ENCODE measurements at regions of chr5 and their contacts with region 1.

Region 1: DNA sequence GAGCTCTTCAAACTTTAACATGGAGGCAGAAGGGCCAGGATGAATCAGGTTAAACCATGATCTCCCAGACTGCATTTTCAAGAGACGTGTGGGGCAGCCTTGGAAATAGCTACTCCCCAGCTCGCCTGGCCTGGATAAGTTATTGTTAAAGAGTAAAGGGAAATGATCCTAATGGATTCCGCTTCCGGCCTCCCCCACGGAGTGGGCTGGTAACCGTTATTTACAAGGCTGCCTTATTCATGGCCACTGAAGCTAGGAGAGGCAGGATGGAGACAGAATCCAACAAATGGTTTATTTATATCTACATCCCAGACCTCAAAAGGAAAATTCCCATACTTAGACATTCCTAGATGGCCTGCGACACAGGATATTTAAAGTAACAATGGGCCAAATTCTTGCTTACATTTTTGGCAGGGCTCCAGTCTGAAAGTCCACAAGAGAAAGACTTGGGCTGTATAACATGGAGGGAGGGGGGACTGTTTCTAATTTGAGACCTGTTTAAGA is 27.9 kb downstream of the SPRY4 start:
- DNase-seq: peak; percentile 98
- H3K4me3 ChIP-seq: no peak overlapping the region
- H3K27ac ChIP-seq: peak overlapping the region; percentile 99
- H3K4me1 ChIP-seq: peaks cover 41% of the 10 kb centered on the region
- H3K27me3 ChIP-seq: no peaks in the 10 kb centered on the region
- CTCF ChIP-seq: no peak
- POLR2A ChIP-seq: no peak

Region 2: DNA sequence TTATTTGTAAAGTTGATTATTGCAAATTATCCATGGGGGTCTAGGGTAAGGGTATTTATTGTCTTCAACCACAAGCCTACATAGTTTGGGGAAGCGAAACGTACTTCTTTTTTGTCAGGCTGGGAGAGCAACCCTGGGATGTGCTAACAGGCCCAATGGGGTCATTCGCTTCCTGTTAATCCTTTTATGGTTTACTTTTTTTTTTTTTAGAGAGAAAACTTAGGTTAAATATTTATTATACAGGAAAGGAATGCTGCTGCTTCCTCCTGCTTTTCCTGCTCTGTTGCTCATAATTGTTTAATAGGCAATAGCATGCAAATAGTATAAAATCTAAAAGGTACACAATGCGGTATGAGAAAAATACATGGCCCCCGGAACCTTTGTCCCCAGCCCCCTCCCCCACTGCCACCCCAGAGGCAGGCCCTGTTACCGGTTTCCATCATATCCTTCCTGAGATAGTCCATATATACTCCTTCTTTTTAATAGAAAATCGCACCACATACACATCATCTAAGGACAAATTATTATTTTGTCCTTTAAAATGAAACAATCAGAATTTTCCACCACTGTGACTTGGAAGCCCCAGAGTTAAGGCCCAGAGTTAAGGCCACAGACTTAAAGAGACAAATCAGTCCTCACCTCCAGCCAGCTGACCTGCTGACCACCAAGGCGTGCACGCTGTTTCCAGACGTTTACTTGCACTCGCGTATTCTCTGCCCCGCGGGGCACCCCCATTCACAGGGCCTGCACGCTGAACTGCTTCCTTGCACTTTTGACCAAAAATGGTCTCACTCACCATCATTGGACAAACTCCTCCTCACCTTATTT is 104.5 kb before region 1 on chr5:
- CTCF ChIA-PET with region 1: no interaction called
- POLR2A ChIA-PET with region 1: no interaction called
- dilution Hi-C with region 1: no loop called
- intact Hi-C with region 1: loop called (anchors 1 kb)
- DNase-seq: peak; percentile 41
- H3K4me3 ChIP-seq: no peak overlapping the region
- H3K27ac ChIP-seq: peak overlapping the region; percentile 75
- H3K4me1 ChIP-seq: peaks cover 29% of the 10 kb centered on the region
- H3K27me3 ChIP-seq: no peaks in the 10 kb centered on the region
- CTCF ChIP-seq: no peak
- POLR2A ChIP-seq: no peak

Region 3: GRCh38 chr5:142222866-142223558 is 74.0 kb before region 1 on chr5:
- CTCF ChIA-PET with region 1: no interaction called
- POLR2A ChIA-PET with region 1: no interaction called
- dilution Hi-C with region 1: no loop called
- intact Hi-C with region 1: loop called (anchors 2 kb)
- DNase-seq: no peak
- H3K4me3 ChIP-seq: no peak overlapping the region
- H3K27ac ChIP-seq: no peak overlapping the region
- H3K4me1 ChIP-seq: peaks cover 26% of the 10 kb centered on the region
- H3K27me3 ChIP-seq: no peaks in the 10 kb centered on the region
- CTCF ChIP-seq: no peak
- POLR2A ChIP-seq: no peak

Region 4: GRCh38 chr5:142280066-142280911 is 16.7 kb before region 1 on chr5:
- CTCF ChIA-PET with region 1: interaction called, 11 read pairs
- POLR2A ChIA-PET with region 1: interaction called, 5 read pairs
- dilution Hi-C with region 1: no loop called
- intact Hi-C with region 1: loop called (anchors 1 kb)
- DNase-seq: peak; percentile 70
- H3K4me3 ChIP-seq: no peak overlapping the region
- H3K27ac ChIP-seq: peak overlapping the region; percentile 75
- H3K4me1 ChIP-seq: peaks cover 15% of the 10 kb centered on the region
- H3K27me3 ChIP-seq: no peaks in the 10 kb centered on the region
- CTCF ChIP-seq: no peak
- POLR2A ChIP-seq: no peak

Region 5: GRCh38 chr5:142324871-142325724 is 28.1 kb after region 1 on chr5 and contains the start of gene SPRY4:
- CTCF ChIA-PET with region 1: interaction called, 8 read pairs
- POLR2A ChIA-PET with region 1: interaction called, 4 read pairs
- dilution Hi-C with region 1: no loop called
- intact Hi-C with region 1: loop called (anchors 1 kb)
- DNase-seq: peak; percentile 98
- H3K4me3 ChIP-seq: peak within 1 kb of the TSS; percentile 76 to 89 (median 81)
- H3K27ac ChIP-seq: peak within 1 kb of the TSS; percentile 88
- H3K4me1 ChIP-seq: peaks cover 48% of the 10 kb centered on the region
- H3K27me3 ChIP-seq: no peaks in the 10 kb centered on the region
- CTCF ChIP-seq: no peak
- POLR2A ChIP-seq: peak; percentile 97
- total RNA-seq, gene SPRY4: 33.9 and 49.5 TPM in 2 replicates

Region 6: GRCh38 chr5:142426129-142427014 is 129.4 kb after region 1 on chr5:
- CTCF ChIA-PET with region 1: interaction called, 4 read pairs
- POLR2A ChIA-PET with region 1: no interaction called
- dilution Hi-C with region 1: no loop called
- intact Hi-C with region 1: loop called (anchors 1 kb)
- DNase-seq: peak; percentile 85
- H3K4me3 ChIP-seq: peak overlapping the region in 1 of 3 experiments; percentile 38
- H3K27ac ChIP-seq: peak overlapping the region; percentile 70
- H3K4me1 ChIP-seq: peaks cover 44% of the 10 kb centered on the region
- H3K27me3 ChIP-seq: no peaks in the 10 kb centered on the region
- CTCF ChIP-seq: no peak
- POLR2A ChIP-seq: peak; percentile 64